ENCODE measurements at regions of chr10 and their contacts with region 1.

Region 1: DNA sequence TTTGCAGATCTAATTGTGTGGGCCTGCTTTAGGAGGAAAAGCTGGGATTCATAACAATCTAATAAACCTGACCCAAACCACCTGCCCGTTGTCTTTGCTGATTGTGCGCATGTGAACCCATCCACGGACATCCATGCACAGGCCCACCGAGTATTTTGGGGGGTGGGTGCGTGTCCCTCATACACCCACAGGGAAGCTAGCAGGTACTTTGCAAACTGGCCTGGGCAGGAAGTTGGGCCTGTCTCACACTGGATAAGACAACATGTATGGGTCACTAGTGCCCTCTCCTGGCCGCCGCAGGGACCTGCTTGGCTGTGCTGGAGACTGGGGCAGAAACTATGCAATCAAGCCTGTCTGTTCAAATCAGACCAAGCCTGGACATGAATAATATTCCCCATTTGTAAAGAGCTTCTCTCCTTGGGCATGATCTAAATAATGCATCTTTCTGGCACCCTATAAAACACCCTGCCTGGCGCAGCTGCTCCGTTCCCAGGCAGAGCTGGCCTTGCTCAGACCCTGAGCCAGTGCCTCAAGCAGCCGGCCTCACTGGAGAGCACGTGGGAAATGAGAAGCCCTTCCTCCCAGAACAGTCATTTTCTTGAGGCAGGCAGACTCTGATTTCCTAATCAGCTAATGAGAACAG is 15.8 kb downstream of the ECHDC3 start:
- H3K4me3 ChIP-seq: no peak overlapping the region
- H3K27ac ChIP-seq: peak overlapping the region; percentile 37; the same call in 1 of the 2 replicates
- H3K4me1 ChIP-seq: peaks cover 4% of the 10 kb centered on the region; the same call in 1 of the 2 replicates
- CTCF ChIP-seq: peak; percentile 84

Region 2: GRCh38 chr10:11236234-11236633 is 521.7 kb before region 1 on chr10:
- CTCF ChIA-PET with region 1: no interaction called
- POLR2A ChIA-PET with region 1: no interaction called
- H3K4me3 ChIP-seq: no peak overlapping the region
- H3K27ac ChIP-seq: no peak overlapping the region
- H3K4me1 ChIP-seq: peaks cover 3% of the 10 kb centered on the region; the same call in 1 of the 2 replicates
- CTCF ChIP-seq: no peak

Region 3: GRCh38 chr10:11515596-11516430 is 242.1 kb before region 1 on chr10:
- CTCF ChIA-PET with region 1: interaction called, 59 read pairs
- POLR2A ChIA-PET with region 1: no interaction called
- H3K4me3 ChIP-seq: no peak overlapping the region
- H3K27ac ChIP-seq: no peak overlapping the region
- H3K4me1 ChIP-seq: no peaks in the 10 kb centered on the region
- CTCF ChIP-seq: peak; percentile 52; the same call in 1 of the 2 replicates

Region 4: GRCh38 chr10:11610166-11610825 is 147.6 kb before region 1 on chr10:
- CTCF ChIA-PET with region 1: interaction called, 11 read pairs
- POLR2A ChIA-PET with region 1: no interaction called
- H3K4me3 ChIP-seq: peak overlapping the region; percentile 88
- H3K27ac ChIP-seq: peak overlapping the region; percentile 84; the same call in 1 of the 2 replicates
- H3K4me1 ChIP-seq: peaks cover 8% of the 10 kb centered on the region; the same call in 1 of the 2 replicates
- CTCF ChIP-seq: no peak

Region 5: GRCh38 chr10:11724938-11725776 is 32.8 kb before region 1 on chr10:
- CTCF ChIA-PET with region 1: interaction called, 10 read pairs
- POLR2A ChIA-PET with region 1: no interaction called
- H3K4me3 ChIP-seq: no peak overlapping the region
- H3K27ac ChIP-seq: no peak overlapping the region
- H3K4me1 ChIP-seq: no peaks in the 10 kb centered on the region
- CTCF ChIP-seq: peak; percentile 54; the same call in 1 of the 2 replicates

Region 6: GRCh38 chr10:11782793-11783557 is 25.0 kb after region 1 on chr10:
- CTCF ChIA-PET with region 1: interaction called, 10 read pairs
- POLR2A ChIA-PET with region 1: interaction called, 6 read pairs
- H3K4me3 ChIP-seq: no peak overlapping the region
- H3K27ac ChIP-seq: no peak overlapping the region
- H3K4me1 ChIP-seq: no peaks in the 10 kb centered on the region
- CTCF ChIP-seq: peak; percentile 41

Region 7: DNA sequence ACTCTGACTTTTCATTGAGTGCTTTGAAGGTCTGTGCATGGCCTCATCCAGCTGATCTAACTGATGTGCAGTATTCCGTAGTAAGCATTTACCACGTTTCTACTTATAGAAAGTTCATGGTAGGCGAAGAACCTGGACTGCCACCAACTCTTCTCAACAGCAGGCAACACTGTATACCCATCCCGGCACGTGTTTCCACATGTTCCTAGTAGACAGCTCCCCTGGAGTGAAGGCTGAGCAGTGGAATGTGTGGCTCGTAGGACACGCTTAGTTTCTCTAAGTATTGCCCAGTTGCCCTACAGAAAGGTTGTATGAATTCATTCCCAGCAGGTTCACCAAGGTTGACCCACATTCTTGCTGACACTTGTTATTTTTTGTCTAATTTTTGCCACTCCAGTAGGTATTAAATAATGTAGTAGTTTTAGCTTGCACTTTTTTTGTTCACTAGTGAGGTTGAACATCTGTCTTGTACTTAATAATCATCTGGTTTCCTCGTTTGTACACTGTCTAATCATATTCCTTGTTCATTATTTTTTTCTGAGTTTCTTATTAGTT is 80.4 kb after region 1 on chr10:
- CTCF ChIA-PET with region 1: no interaction called
- POLR2A ChIA-PET with region 1: no interaction called
- H3K4me3 ChIP-seq: no peak overlapping the region
- H3K27ac ChIP-seq: no peak overlapping the region
- H3K4me1 ChIP-seq: no peaks in the 10 kb centered on the region
- CTCF ChIP-seq: no peak

Measured in HEK293 (cell line).